ENCODE measurements at regions of chr17 and their contacts with region 1.

Region 1: DNA sequence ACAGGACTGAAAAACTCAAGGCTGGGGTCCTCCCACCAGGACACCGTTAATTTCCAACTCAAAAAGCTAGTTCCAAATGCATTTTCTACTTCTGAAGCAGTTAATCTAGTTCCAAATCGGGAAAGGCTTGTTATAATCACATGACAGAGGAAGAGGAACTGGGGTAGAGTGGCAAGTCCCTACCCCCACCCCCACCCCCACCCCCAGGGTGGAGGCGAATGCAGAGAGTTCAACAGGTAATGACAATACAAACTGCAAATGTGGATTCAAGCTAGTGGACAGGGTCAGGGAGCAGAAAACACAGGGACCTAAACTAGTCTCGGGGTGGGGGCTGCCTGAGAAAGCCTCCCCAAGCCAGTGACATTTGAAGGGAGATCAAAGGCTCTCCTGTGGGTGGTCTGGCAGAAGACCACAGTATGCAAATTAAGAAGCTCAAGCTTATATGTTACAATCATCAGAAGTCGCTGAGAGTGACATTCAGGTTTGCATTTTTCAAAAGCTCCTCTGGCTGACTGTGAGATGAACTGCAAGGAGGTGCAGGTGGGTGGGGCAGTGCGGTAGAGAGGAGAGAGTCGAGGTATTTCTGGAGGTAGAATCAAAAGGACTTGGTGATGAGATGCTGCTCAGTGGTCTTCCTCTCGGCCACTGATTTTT is 56.4 kb upstream of the SLC25A19 start:
- DNase-seq: peak; percentile 92
- ATAC-seq: peak; percentile 84
- H3K4me3 ChIP-seq: peak overlapping the region; percentile 48 to 70 (median 61)
- H3K4me3 Mint-ChIP-seq: peak overlapping the region; percentile 86
- H3K27ac ChIP-seq: peak overlapping the region; percentile 97 to 99
- H3K27ac Mint-ChIP-seq: peak overlapping the region; percentile 89
- H3K4me1 ChIP-seq: peaks cover 78 to 94% of the 10 kb centered on the region in 2 donors
- H3K4me1 Mint-ChIP-seq: peaks cover 85% of the 10 kb centered on the region
- H3K27me3 ChIP-seq: no peaks in the 10 kb centered on the region
- H3K27me3 Mint-ChIP-seq: no peaks in the 10 kb centered on the region
- CTCF ChIP-seq: no peak

Region 2: DNA sequence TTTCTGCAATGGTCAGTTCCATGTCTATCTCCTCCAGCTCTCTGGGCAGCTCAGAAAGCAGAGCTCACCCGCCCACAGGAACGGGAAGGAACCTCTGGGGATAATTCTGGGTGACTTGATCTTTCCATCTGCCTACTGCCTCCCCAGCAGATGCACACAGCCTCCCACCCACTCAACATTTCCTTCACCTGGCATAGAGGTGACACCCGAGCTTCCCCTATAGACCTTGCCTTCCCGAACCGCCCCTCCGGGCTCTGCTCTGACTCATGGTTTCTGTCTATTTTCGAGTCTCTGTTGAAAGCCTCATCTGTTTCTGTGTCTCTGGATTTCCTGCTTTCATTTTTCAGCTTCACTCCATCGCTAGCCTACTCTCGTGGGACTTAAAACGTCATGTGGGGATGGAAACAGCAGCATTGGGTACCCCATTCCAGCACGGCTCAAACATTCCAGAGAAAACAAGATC is 95.6 kb before region 1 on chr17:
- CTCF ChIA-PET with region 1: no interaction called
- POLR2A ChIA-PET with region 1: no interaction called
- intact Hi-C with region 1: no loop called
- DNase-seq: peak; percentile 50
- ATAC-seq: peak; percentile 82
- H3K4me3 ChIP-seq: peak overlapping the region in 1 of 5 experiments; percentile 1
- H3K4me3 Mint-ChIP-seq: peak overlapping the region; percentile 71
- H3K27ac ChIP-seq: peak overlapping the region; percentile 49 to 68
- H3K27ac Mint-ChIP-seq: peak overlapping the region; percentile 91
- H3K4me1 ChIP-seq: peaks cover 32 to 50% of the 10 kb centered on the region in 2 donors
- H3K4me1 Mint-ChIP-seq: peaks cover 56% of the 10 kb centered on the region
- H3K27me3 ChIP-seq: no peaks in the 10 kb centered on the region
- H3K27me3 Mint-ChIP-seq: no peaks in the 10 kb centered on the region
- CTCF ChIP-seq: no peak

Region 3: GRCh38 chr17:75271233-75271954 is 74.2 kb before region 1 on chr17:
- CTCF ChIA-PET with region 1: interaction called, 13 read pairs
- POLR2A ChIA-PET with region 1: interaction called, 6 read pairs
- intact Hi-C with region 1: no loop called
- DNase-seq: peak; percentile 94
- ATAC-seq: peak; percentile 90
- H3K4me3 ChIP-seq: peak overlapping the region; percentile 26 to 93 (median 74)
- H3K4me3 Mint-ChIP-seq: peak overlapping the region; percentile 88
- H3K27ac ChIP-seq: peak overlapping the region; percentile 78 to 83
- H3K27ac Mint-ChIP-seq: peak overlapping the region; percentile 82
- H3K4me1 ChIP-seq: peaks cover 17 to 28% of the 10 kb centered on the region in 2 donors
- H3K4me1 Mint-ChIP-seq: peaks cover 23% of the 10 kb centered on the region
- H3K27me3 ChIP-seq: no peaks in the 10 kb centered on the region
- H3K27me3 Mint-ChIP-seq: no peaks in the 10 kb centered on the region
- CTCF ChIP-seq: peak; percentile 73

Region 4: DNA sequence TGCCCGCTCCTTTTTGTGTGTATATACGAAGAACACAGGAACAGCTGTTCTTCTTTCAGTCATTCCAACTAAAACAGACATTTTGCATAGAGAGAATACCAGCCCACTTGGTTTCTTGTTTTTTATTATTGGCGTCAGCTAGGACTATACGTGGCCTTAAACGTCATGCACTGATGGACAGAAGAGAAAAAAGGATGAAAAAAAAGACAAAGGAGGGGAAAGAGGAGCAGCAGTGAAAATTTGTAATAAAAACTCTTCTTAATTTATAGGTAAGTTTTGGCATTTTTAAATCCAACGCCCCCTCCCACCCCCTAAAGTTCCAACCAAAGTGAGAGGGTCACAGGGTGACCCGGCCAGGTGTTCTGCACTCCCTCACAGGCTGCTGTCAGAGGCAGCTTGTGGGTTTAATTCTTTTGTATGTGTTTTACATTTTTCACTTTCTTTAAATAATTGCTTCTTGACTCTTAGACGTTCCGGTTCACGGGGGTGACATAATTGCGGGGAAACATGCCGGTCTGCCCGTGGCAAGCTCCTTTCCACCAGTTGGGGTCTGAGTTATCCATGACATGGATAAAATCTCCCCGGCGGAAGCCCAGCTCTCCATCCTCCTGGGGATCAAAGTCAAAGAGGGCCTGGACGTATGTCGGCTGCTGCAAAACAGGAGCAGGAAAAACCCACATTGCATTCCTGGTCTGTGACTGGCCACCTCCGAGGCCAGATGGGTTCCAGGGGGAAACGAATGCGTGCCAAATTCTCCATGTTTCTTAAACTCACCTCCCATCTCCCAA is 25.5 kb before region 1 on chr17:
- CTCF ChIA-PET with region 1: interaction called, 264 read pairs
- POLR2A ChIA-PET with region 1: interaction called, 6 read pairs
- intact Hi-C with region 1: loop called (anchors 1 kb)
- DNase-seq: peak; percentile 57
- ATAC-seq: peak; percentile 59
- H3K4me3 ChIP-seq: no peak overlapping the region
- H3K4me3 Mint-ChIP-seq: peak overlapping the region; percentile 77
- H3K27ac ChIP-seq: peak overlapping the region; percentile 71 to 81
- H3K27ac Mint-ChIP-seq: peak overlapping the region; percentile 92
- H3K4me1 ChIP-seq: peaks cover 39 to 73% of the 10 kb centered on the region in 2 donors
- H3K4me1 Mint-ChIP-seq: peaks cover 64% of the 10 kb centered on the region
- H3K27me3 ChIP-seq: no peaks in the 10 kb centered on the region
- H3K27me3 Mint-ChIP-seq: no peaks in the 10 kb centered on the region
- CTCF ChIP-seq: no peak

Region 5: DNA sequence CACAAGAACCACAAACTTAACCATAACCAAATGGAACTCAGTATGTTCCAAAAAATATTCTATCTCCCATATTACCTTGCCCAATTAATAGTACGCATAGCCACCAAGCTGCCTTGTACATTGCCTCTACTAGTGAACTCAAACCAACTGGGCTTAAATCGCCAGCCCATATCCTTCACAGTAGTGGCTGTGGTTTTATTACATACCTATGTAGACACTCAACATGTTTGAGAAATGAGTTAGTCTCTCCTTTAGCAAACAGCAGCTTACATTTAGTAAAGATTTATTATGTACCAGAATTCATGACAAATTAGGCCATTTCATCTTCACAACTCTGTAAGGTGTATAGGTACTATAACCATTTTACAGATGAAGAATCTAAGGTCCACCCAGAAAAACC is 18.4 kb after region 1 on chr17:
- CTCF ChIA-PET with region 1: interaction called, 7 read pairs
- POLR2A ChIA-PET with region 1: interaction called, 21 read pairs
- intact Hi-C with region 1: loop called (anchors 2 kb)
- DNase-seq: no peak
- ATAC-seq: no peak
- H3K4me3 ChIP-seq: no peak overlapping the region
- H3K4me3 Mint-ChIP-seq: peak overlapping the region; percentile 64
- H3K27ac ChIP-seq: peak overlapping the region; percentile 8 to 70
- H3K27ac Mint-ChIP-seq: peak overlapping the region; percentile 62
- H3K4me1 ChIP-seq: peaks cover 84 to 93% of the 10 kb centered on the region in 2 donors
- H3K4me1 Mint-ChIP-seq: peaks cover 92% of the 10 kb centered on the region
- H3K27me3 ChIP-seq: no peaks in the 10 kb centered on the region
- H3K27me3 Mint-ChIP-seq: no peaks in the 10 kb centered on the region
- CTCF ChIP-seq: no peak

Region 6: DNA sequence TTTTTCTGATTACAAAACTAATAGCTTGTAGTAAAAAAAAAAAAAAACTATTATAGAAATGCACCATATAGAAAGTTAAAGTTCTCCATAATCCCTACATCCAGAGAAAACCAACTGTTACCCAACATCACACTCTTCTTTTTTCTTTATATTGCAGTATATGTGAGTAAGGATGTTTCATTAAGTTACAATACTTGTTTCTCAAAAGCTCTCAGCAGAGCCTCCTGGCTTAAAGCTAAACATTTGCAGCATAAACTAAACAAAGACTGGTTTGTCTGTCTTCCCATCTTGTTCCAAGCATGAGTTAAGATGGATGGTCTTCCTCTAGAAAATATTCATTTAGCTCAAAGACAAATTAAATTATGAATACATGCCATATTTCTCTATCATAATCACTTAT is 34.7 kb after region 1 on chr17:
- CTCF ChIA-PET with region 1: interaction called, 6 read pairs
- POLR2A ChIA-PET with region 1: interaction called, 11 read pairs
- intact Hi-C with region 1: no loop called
- DNase-seq: no peak
- ATAC-seq: no peak
- H3K4me3 ChIP-seq: no peak overlapping the region
- H3K4me3 Mint-ChIP-seq: no peak overlapping the region
- H3K27ac ChIP-seq: peak overlapping the region in 1 of 2 donors; percentile 68
- H3K27ac Mint-ChIP-seq: no peak overlapping the region
- H3K4me1 ChIP-seq: peaks cover 54 to 56% of the 10 kb centered on the region in 2 donors
- H3K4me1 Mint-ChIP-seq: peaks cover 65% of the 10 kb centered on the region
- H3K27me3 ChIP-seq: no peaks in the 10 kb centered on the region
- H3K27me3 Mint-ChIP-seq: no peaks in the 10 kb centered on the region
- CTCF ChIP-seq: no peak

Region 7: GRCh38 chr17:75405365-75406221 is 60.0 kb after region 1 on chr17 and contains the start of gene GRB2:
- CTCF ChIA-PET with region 1: interaction called, 7 read pairs
- POLR2A ChIA-PET with region 1: interaction called, 8 read pairs
- intact Hi-C with region 1: loop called (anchors 1 kb)
- DNase-seq: peak; percentile 98
- ATAC-seq: peak; percentile 89
- H3K4me3 ChIP-seq: peak within 1 kb of the TSS; percentile 91 to 99 (median 99)
- H3K4me3 Mint-ChIP-seq: peak within 1 kb of the TSS; percentile 98
- H3K27ac ChIP-seq: peak within 1 kb of the TSS; percentile 79 to 92
- H3K27ac Mint-ChIP-seq: peak within 1 kb of the TSS; percentile 97
- H3K4me1 ChIP-seq: peaks cover 32 to 43% of the 10 kb centered on the region in 2 donors
- H3K4me1 Mint-ChIP-seq: peaks cover 39% of the 10 kb centered on the region
- H3K27me3 ChIP-seq: no peaks in the 10 kb centered on the region
- H3K27me3 Mint-ChIP-seq: no peaks in the 10 kb centered on the region
- CTCF ChIP-seq: no peak
- total RNA-seq, gene GRB2: 219 and 224 TPM in 2 replicates

Region 8: DNA sequence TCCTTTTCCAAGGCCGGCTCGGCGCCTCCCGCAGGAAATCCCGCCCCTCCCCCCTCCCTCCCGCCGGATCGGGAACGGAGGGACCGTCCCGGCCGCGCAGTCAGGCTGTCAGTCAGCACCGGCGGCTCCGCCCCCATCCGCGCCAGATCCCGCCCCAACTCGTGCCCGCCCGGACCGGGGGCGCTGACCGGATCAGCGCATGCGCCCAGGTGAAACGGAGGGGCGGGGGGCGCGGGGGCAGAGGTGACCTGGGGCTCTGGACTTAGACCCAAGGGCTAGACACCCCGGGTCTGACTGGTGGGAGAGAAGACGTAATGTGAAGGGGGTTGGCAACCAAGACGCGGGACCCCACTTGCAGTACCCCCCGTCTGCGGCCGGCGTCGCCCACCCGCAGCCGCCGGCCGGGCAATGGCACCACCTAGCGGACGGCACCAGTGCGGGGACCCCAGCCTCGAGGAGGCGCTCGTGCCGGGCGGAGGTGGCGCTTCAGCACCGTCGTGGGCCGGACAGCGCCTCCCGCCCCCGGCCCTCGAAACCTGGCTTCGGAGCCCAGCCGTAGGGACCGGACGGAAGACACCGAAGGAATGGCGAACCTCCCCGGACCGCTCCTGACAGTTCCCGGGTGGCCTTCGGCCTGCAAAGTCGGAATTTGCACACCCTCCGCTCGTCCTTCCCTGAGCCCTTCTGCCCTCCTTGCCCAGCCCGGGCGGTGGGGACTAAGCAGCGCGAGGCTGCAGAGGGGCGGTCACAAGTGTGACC is 170.0 kb after region 1 on chr17 and contains the start of gene CASKIN2:
- CTCF ChIA-PET with region 1: no interaction called
- POLR2A ChIA-PET with region 1: interaction called, 3 read pairs
- intact Hi-C with region 1: loop called (anchors 5 kb)
- DNase-seq: peak; percentile 90
- ATAC-seq: peak; percentile 67
- H3K4me3 ChIP-seq: peak within 1 kb of the TSS; percentile 38 to 96 (median 63)
- H3K4me3 Mint-ChIP-seq: peak within 1 kb of the TSS; percentile 78
- H3K27ac ChIP-seq: no peak within 1 kb of the TSS
- H3K27ac Mint-ChIP-seq: peak within 1 kb of the TSS; percentile 32
- H3K4me1 ChIP-seq: peaks cover 26 to 39% of the 10 kb centered on the region in 2 donors
- H3K4me1 Mint-ChIP-seq: peaks cover 19% of the 10 kb centered on the region
- H3K27me3 ChIP-seq: no peaks in the 10 kb centered on the region
- H3K27me3 Mint-ChIP-seq: no peaks in the 10 kb centered on the region
- CTCF ChIP-seq: peak; percentile 94
- total RNA-seq, gene CASKIN2: 0.37 and 0.97 TPM in 2 replicates

Measured in B cell (primary cell).